ENCODE measurements at regions of chr3 and their contacts with region 1.

Region 1: GRCh38 chr3:47324278-47324865 is 41.6 kb downstream of the KLHL18 start:
- DNase-seq: peak; percentile 60
- ATAC-seq: peak; percentile 71
- H3K4me3 Mint-ChIP-seq: no peak overlapping the region
- H3K27ac Mint-ChIP-seq: no peak overlapping the region
- H3K4me1 Mint-ChIP-seq: peaks cover 8% of the 10 kb centered on the region
- H3K27me3 Mint-ChIP-seq: no peaks in the 10 kb centered on the region

Region 2: DNA sequence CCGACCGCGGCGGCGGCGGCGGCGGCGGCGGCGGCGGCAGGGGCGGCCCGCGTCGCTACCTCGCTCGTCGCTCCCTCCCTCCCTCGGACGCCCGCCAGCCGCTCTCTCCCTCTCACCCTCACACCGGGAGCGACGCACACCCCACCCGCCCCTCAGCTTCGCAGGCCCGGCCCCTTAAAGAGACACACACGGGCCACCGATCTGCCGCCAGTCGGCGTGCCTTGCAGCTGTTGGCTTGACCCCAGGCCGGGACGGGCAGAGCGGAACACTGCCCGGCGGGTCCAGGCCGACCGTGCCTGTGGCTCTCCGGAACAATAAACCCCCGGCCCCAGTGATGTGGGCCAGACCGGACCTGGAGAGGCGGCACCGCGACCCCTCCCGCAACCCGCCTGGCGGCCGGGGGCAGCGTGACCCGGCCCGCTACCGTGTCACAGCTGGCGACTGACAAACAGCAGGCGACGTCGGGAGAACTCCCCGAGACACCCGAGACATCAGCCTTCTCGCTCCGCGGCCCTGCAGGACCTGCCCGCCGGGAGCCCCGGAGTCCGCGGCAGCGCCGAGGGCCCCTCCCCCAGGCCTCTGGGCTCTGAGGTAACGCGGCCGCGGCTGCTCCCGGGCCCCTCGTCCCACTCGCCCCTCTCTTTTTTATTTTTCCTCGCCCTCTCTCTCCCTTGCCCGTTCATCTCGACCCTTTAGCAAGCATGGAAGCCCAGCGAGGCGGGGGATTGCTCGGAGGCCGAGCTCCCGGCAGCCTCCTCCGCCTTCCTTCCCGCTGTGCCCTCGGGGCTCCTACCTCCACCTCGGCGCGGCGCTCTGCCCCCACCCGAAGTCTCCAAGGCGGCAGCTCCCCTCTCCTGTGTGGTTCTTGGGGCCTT is 160.1 kb before region 1 on chr3 and contains the start of gene SETD2:
- CTCF ChIA-PET with region 1: interaction called, 17 read pairs
- DNase-seq: peak; percentile 93
- ATAC-seq: peak; percentile 90
- H3K4me3 Mint-ChIP-seq: peak within 1 kb of the TSS; percentile 99
- H3K27ac Mint-ChIP-seq: peak within 1 kb of the TSS; percentile 100
- H3K4me1 Mint-ChIP-seq: peaks cover 42% of the 10 kb centered on the region
- H3K27me3 Mint-ChIP-seq: no peaks in the 10 kb centered on the region
- total RNA-seq, gene SETD2: 38.0 to 43.3 TPM

Region 3: GRCh38 chr3:47984097-47984728 is 659.8 kb after region 1 on chr3:
- CTCF ChIA-PET with region 1: no interaction called
- DNase-seq: no peak
- ATAC-seq: no peak
- H3K4me3 Mint-ChIP-seq: no peak overlapping the region
- H3K27ac Mint-ChIP-seq: no peak overlapping the region
- H3K4me1 Mint-ChIP-seq: peaks cover 2% of the 10 kb centered on the region
- H3K27me3 Mint-ChIP-seq: no peaks in the 10 kb centered on the region

Measured in activated CD8-positive, alpha-beta memory T cell treated with anti-CD3 and anti-CD28 coated beads, Interleukin-2, amount 10 ng/mL, durations not matched to agents 7 days and 5 days (primary cell).